Left ventricle myocardium inferior (tissue), 1 donor: ENCODE measurements at regions of chr15 and their contacts with region 1.

Region 1: GRCh38 chr15:69735121-69735520 is 282.5 kb downstream of the RPLP1 start:
- DNase-seq: no peak
- H3K4me3 ChIP-seq: no peak overlapping the region
- H3K27ac ChIP-seq: no peak overlapping the region
- H3K4me1 ChIP-seq: no peaks in the 10 kb centered on the region
- H3K27me3 ChIP-seq: peaks cover 80% of the 10 kb centered on the region
- CTCF ChIP-seq: no peak

Region 2: GRCh38 chr15:69893863-69894262 is 158.7 kb after region 1 on chr15:
- intact Hi-C with region 1: no loop called
- DNase-seq: peak; percentile 42
- H3K4me3 ChIP-seq: no peak overlapping the region
- H3K27ac ChIP-seq: no peak overlapping the region
- H3K4me1 ChIP-seq: peaks cover 8% of the 10 kb centered on the region
- H3K27me3 ChIP-seq: peaks cover 87% of the 10 kb centered on the region
- CTCF ChIP-seq: no peak

Region 3: DNA sequence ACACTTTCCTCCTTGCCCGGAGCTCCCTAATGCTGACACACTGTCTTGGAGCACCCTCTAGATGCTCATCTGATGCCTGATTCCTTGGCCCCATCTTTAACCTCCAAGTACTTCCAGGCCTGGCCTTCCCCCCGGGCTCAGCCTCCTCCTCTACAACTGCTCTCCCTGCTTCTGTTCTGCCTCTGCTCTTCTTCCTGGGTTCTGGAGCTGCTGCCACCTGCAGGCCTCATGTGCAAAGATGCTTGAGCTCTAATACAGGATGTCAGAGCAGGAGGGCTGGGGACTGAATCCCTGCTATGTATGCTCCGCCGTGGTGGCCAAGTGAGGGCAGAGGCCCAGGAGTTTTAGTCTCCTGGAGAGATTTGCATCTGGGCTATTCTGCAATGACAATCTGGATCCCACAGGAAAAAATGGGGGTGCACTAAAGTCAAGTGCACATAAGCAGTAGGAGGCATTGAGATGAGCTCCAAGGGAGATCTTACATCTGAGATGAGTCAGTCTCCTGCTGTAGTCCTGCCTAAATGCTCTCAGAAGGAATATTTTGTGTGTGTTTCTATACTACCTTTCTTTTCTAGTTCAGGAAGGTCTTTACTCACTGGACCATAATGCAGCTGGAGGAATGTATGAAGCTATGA is 731.9 kb after region 1 on chr15:
- intact Hi-C with region 1: loop called (anchors 10 kb)
- DNase-seq: peak; percentile 46
- H3K4me3 ChIP-seq: no peak overlapping the region
- H3K27ac ChIP-seq: no peak overlapping the region
- H3K4me1 ChIP-seq: no peaks in the 10 kb centered on the region
- H3K27me3 ChIP-seq: peaks cover 75% of the 10 kb centered on the region
- CTCF ChIP-seq: peak; percentile 66